Activated naive CD4-positive, alpha-beta T cell treated with anti-CD3 and anti-CD28 coated beads, Interleukin-2, amount 10 ng/mL, durations not matched to agents 7 days and 5 days (primary cell): ENCODE measurements at regions of chr10 and their contacts with region 1.

Region 1: DNA sequence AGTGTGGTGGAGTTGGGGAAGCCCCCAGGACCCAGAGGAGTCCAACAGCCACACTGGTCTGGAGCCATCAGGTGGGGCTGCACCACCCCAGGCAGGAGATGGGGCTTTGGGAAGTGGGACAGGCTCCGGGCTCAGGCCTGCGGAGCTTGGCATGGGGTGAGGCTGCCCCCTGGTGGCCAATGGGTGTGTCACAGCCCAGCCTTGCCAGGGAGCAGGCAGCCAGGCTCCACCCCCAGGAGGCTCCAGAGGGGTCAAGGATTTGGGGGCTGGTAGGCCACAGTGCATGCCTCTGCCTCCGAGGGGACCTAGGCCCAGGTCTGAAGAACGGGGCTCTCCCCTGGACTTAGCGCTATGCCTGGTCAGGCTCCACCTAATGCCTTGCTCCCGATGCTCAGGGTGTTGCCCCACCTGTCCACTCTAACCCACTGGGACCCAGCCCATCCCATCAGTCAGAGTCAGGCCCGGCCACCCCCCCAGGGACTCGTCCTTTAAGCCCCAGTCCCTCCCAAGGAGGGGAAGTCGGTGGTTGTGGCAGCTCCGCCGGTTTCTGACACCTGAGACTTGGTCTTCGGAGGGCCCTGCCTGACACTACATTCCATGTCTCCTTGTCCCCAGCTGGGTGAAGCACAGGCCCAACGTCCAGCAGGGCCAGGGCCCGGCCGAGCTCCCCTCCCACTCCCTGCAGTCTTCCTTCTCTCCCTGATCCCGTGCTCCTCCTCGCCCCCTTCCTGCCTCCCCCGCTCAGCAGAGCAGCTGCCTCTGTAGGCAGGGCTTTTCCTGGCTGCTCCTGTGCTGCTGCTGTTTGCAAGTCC is 11.3 kb upstream of the SAMD8 start:
- DNase-seq: peak; percentile 85
- H3K4me3 Mint-ChIP-seq: no peak overlapping the region
- H3K27ac Mint-ChIP-seq: no peak overlapping the region
- H3K4me1 Mint-ChIP-seq: peaks cover 4% of the 10 kb centered on the region
- H3K27me3 Mint-ChIP-seq: peaks cover 4% of the 10 kb centered on the region

Region 2: GRCh38 chr10:74244097-74244685 is 856.0 kb before region 1 on chr10:
- CTCF ChIA-PET with region 1: interaction called, 31 read pairs
- DNase-seq: peak; percentile 49
- H3K4me3 Mint-ChIP-seq: no peak overlapping the region
- H3K27ac Mint-ChIP-seq: no peak overlapping the region
- H3K4me1 Mint-ChIP-seq: no peaks in the 10 kb centered on the region
- H3K27me3 Mint-ChIP-seq: no peaks in the 10 kb centered on the region

Region 3: GRCh38 chr10:75079436-75080083 is 20.6 kb before region 1 on chr10:
- CTCF ChIA-PET with region 1: no interaction called
- DNase-seq: no peak
- H3K4me3 Mint-ChIP-seq: no peak overlapping the region
- H3K27ac Mint-ChIP-seq: no peak overlapping the region
- H3K4me1 Mint-ChIP-seq: peaks cover 5% of the 10 kb centered on the region
- H3K27me3 Mint-ChIP-seq: peaks cover 6% of the 10 kb centered on the region

Region 4: DNA sequence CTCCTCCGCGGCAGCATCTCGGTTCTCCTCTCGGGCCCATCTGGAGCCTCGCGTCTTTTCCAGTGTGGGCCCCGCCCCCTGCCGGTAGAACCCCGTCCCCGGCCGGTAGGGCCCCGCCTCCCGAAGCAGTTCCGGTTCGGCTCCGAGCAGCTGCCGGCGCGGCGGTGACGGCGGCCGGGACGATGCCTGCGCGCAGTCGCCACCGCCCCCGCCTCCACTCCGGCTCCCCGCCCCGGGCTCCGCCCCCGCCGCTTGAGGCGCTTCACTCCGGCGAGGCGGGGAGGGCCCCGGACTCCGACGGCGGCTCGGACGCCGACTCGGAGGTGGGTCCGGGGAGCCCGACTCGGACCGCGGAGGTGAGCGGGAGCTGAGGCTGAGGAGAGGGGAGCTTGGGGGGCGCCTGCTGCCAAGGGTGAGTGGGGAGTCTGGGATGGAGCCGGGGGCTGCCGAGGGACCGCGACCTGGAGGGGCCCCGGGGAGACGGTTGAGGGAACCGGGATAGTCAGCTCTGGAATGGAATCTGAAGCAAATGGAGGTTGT is 11.3 kb after region 1 on chr10 and contains the start of gene SAMD8:
- CTCF ChIA-PET with region 1: interaction called, 11 read pairs
- DNase-seq: peak; percentile 98
- H3K4me3 Mint-ChIP-seq: peak within 1 kb of the TSS; percentile 76
- H3K27ac Mint-ChIP-seq: peak within 1 kb of the TSS; percentile 89
- H3K4me1 Mint-ChIP-seq: peaks cover 55% of the 10 kb centered on the region
- H3K27me3 Mint-ChIP-seq: peaks cover under 1% of the 10 kb centered on the region

Region 5: GRCh38 chr10:75137533-75138438 is 37.6 kb after region 1 on chr10:
- CTCF ChIA-PET with region 1: no interaction called
- DNase-seq: no peak
- H3K4me3 Mint-ChIP-seq: no peak overlapping the region
- H3K27ac Mint-ChIP-seq: no peak overlapping the region
- H3K4me1 Mint-ChIP-seq: peaks cover 7% of the 10 kb centered on the region
- H3K27me3 Mint-ChIP-seq: no peaks in the 10 kb centered on the region